ENCODE measurements at regions of chr6 and their contacts with region 1.

Region 1: DNA sequence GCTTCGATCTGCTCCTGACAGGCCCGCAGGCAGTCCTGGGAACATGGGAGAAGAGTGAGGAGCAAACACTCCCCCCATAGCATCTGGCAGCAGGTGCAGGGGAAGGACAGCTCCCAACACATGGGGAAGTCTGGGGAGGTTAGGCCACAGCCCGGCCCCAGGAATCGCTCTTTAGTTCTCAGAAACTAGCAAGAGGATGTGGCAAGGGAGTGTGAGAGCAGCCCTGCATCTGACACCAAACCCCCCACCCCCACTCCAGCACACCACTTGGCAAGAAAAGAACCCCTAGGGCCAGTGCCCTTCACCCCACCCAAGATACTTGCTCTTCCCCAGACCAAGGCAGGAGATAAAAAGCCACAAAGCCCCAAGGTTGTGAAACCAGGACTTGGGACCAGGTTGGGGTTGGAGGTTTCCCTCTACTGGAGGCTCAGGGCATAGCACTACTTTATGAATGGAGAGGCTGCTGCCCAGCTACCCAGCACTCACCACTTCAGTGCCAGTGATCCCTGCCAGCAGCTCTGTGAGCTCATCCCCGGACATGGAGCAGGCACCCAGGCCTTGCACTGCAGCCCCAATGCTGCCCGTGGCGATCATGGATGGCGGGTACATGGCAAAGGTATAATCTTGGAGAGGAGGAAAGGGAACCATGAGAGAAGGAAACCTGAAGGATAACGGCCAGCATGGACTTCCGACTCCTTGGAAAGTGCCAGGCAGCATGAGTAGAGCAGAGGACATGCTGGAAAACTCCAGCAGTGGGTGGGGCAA is 5.4 kb downstream of the CCND3 start:
- DNase-seq: peak; percentile 83
- H3K4me3 Mint-ChIP-seq: peak overlapping the region; percentile 99
- H3K27ac Mint-ChIP-seq: peak overlapping the region; percentile 84
- H3K4me1 Mint-ChIP-seq: peaks cover 77% of the 10 kb centered on the region
- H3K27me3 Mint-ChIP-seq: no peaks in the 10 kb centered on the region

Region 2: GRCh38 chr6:41672821-41673703 is 263.2 kb before region 1 on chr6:
- intact Hi-C with region 1: no loop called
- DNase-seq: no peak
- H3K4me3 Mint-ChIP-seq: no peak overlapping the region
- H3K27ac Mint-ChIP-seq: no peak overlapping the region
- H3K4me1 Mint-ChIP-seq: no peaks in the 10 kb centered on the region
- H3K27me3 Mint-ChIP-seq: peaks cover 19% of the 10 kb centered on the region

Region 3: GRCh38 chr6:41846666-41847237 is 89.5 kb before region 1 on chr6:
- intact Hi-C with region 1: loop called (anchors 1 kb)
- DNase-seq: peak; percentile 31
- H3K4me3 Mint-ChIP-seq: no peak overlapping the region
- H3K27ac Mint-ChIP-seq: no peak overlapping the region
- H3K4me1 Mint-ChIP-seq: peaks cover 11% of the 10 kb centered on the region
- H3K27me3 Mint-ChIP-seq: no peaks in the 10 kb centered on the region

Region 4: DNA sequence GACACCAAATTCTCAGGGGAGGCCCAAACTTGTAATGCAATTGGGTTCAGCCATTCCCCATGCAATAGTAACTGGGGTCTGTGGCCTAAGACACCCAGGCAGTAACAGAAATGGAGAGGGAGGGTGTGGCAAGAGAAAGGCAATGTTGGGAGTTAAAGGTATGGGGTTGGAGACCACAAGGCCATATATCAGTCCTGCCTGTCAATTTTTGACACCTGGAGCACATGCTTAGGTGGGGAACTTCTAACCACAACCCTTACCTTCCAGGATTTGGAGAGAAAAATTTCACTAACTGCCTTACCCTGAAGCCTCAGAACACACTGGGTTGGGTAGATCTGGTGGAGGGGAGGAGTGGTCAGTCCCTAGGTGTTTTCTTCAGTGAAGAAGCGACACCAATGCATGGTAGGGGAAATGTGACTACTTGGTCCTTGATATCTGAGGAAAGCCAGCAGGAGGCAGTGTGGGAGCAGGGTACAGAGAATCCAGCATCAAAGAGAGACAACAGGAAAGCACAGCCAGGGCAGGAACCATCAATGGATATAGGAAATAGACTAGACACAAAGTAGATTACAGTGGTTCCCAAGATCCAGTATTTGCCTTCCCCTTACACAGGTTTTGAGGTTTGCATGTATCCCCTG is 34.3 kb before region 1 on chr6:
- intact Hi-C with region 1: loop called (anchors 1 kb)
- DNase-seq: peak; percentile 31
- H3K4me3 Mint-ChIP-seq: no peak overlapping the region
- H3K27ac Mint-ChIP-seq: no peak overlapping the region
- H3K4me1 Mint-ChIP-seq: peaks cover 32% of the 10 kb centered on the region
- H3K27me3 Mint-ChIP-seq: no peaks in the 10 kb centered on the region

Region 5: DNA sequence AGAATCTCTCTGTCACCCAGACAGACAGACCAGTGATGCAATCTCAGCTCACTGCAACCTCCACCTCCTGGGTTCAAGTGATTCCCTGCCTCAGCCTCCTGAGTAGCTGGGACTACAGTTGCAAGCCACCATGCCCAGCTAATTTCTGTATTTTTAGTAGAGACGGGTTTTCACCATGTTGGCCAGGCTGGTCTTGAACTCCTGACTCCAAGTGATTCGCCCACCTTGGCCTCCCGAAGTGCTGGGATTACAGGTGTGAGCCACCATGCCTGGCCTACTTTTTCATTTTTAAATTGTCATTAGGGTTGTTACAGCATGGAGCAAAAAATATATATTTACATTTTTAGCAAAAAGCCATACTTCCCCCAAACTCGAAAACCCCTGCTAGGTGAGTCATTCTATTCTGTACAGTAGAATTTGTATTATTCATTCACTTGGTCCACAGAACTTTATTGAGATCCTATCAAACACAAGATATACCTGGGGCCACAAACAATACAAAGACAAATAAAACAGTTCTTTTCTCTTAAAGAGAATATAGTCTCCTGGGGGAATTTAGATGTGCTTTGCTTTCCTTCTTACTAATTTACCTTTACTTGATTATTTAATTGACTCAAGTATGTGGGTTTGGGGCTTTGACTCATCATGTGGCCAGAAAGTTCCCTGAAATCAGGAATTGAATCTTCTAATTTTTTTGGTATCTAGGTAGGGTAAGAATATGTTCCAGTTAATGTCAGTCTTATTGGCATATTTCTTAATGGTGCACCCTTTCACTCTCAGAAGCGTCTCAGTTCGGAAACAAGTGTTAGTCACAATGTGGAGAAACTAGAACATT is 22.0 kb after region 1 on chr6:
- intact Hi-C with region 1: loop called (anchors 2 kb)
- DNase-seq: no peak
- H3K4me3 Mint-ChIP-seq: peak overlapping the region; percentile 29
- H3K27ac Mint-ChIP-seq: peak overlapping the region; percentile 88
- H3K4me1 Mint-ChIP-seq: peaks cover 26% of the 10 kb centered on the region
- H3K27me3 Mint-ChIP-seq: no peaks in the 10 kb centered on the region

Region 6: GRCh38 chr6:42038811-42039408 is 102.7 kb after region 1 on chr6:
- intact Hi-C with region 1: loop called (anchors 1 kb)
- DNase-seq: no peak
- H3K4me3 Mint-ChIP-seq: peak overlapping the region; percentile 81
- H3K27ac Mint-ChIP-seq: peak overlapping the region; percentile 94
- H3K4me1 Mint-ChIP-seq: peaks cover 61% of the 10 kb centered on the region
- H3K27me3 Mint-ChIP-seq: no peaks in the 10 kb centered on the region

Region 7: DNA sequence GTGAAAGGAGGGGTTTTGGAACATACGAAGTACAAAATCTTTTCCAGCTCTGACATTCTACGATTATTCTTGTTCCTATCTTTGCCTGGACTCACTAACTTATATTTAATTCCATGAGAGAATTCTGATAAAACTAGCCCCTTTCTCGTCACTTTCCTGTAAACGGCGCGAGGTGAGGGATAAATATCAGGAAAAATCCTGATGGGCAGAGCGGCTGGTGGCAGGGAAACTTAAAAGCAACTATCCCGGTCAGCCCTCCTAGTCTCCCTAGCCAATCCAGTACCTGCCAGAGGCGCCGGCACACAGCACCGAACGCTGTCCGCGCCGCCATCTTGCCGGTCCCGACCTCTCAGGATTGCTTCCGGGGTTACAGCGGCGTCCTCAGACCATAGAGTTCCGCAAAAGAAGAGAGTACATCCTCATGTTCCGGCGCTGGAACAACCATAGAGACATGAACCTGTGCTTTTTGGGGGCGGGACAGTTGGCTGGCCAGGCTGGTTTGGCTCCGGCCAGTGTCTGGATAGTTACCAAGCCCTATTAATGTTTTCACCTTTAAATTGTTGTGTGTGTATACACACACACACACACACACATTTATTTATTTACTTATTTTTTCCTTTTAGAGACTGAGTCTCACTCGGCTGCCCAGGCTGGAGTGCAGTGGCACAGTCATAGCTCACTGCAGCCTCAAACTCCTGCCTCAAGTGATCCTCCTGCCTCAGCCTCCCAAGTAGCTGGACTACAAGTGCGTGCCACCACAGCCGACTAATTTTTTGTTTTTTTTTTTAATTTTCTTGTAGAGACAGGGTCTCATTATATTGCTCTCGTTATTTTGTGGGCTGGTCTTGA is 281.5 kb after region 1 on chr6 and contains the start of gene MRPS10:
- intact Hi-C with region 1: loop called (anchors 5 kb)
- DNase-seq: peak; percentile 89
- H3K4me3 Mint-ChIP-seq: peak within 1 kb of the TSS; percentile 96
- H3K27ac Mint-ChIP-seq: peak within 1 kb of the TSS; percentile 89
- H3K4me1 Mint-ChIP-seq: peaks cover 20% of the 10 kb centered on the region
- H3K27me3 Mint-ChIP-seq: no peaks in the 10 kb centered on the region
- total RNA-seq, gene MRPS10: 48.8 and 49.7 TPM in 2 replicates